PC-9 (cell line): ENCODE measurements at regions of chr15 and their contacts with region 1.

Region 1: DNA sequence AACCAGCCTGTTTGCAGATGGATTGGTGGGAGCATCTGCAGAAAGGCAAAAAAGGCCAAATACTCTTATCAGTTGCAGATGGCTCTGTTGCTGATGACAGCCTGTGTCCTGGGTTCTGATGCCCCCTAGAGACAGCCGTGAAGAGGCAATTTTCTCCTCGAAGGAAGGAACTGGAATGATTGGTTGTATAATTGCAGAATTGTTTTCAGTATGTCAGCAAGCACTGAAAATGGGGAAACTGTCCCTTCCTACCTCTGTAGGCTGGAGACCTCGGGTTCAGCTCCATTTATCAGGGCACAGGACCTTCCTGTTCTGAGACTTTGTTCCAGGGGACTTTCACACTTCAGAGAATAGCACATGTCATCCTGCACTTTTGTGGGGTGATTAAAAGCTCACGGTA is 103.0 kb downstream of the PGPEP1L start:
- DNase-seq: peak in 1 of 2 experiments; percentile 43
- H3K4me3 ChIP-seq: no peak overlapping the region
- H3K27ac ChIP-seq: no peak overlapping the region
- H3K4me1 ChIP-seq: no peaks in the 10 kb centered on the region
- H3K27me3 ChIP-seq: no peaks in the 10 kb centered on the region
- CTCF ChIP-seq: peak; percentile 72

Region 2: GRCh38 chr15:98442379-98442833 is 462.1 kb before region 1 on chr15:
- CTCF ChIA-PET with region 1: no interaction called
- POLR2A ChIA-PET with region 1: no interaction called
- intact Hi-C with region 1: loop called (anchors 5 kb)
- DNase-seq: peak; percentile 74 to 79
- H3K4me3 ChIP-seq: no peak overlapping the region
- H3K27ac ChIP-seq: no peak overlapping the region
- H3K4me1 ChIP-seq: peaks cover 15% of the 10 kb centered on the region
- H3K27me3 ChIP-seq: peaks cover 24% of the 10 kb centered on the region; the same call in 1 of the 2 replicates
- CTCF ChIP-seq: peak; percentile 88

Region 3: DNA sequence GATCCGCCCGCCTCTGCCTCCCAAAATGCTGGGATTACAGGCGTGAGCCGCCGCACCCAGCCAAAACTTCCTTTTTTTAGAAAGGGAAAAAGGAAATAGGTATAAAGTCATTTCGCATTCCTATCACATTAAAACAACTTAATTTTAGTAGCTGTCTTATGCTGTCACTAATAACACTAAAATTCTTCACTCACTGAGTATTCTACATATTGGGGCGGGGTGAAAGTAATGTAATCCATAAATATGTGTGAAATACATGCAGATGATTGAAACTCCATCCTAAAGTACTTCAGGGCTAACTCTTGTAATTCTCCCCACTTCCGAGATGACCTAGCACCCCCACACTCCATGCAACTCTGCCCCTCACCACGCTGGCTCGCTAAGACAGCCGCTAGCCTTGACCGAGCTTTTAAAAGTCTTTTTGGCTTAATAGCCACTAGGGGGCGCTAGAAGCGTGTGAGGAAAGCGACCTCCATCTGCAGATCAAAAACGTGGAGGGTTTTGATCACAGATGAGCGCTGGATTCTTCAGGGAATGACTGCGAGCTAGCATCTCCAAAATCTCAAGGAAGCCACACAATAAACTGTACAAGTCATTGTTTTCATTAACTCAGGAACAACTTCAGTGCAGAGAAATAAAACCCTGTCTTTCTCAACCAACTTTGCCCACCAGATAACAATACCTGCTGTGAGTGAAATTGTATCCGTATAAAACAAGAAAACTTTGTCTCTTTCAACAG is 385.6 kb before region 1 on chr15:
- CTCF ChIA-PET with region 1: no interaction called
- POLR2A ChIA-PET with region 1: no interaction called
- intact Hi-C with region 1: loop called (anchors 1 kb)
- DNase-seq: peak; percentile 47 to 62
- H3K4me3 ChIP-seq: no peak overlapping the region
- H3K27ac ChIP-seq: no peak overlapping the region
- H3K4me1 ChIP-seq: no peaks in the 10 kb centered on the region
- H3K27me3 ChIP-seq: 0 out of 2 replicates have a peak, but pooled peaks cover 5% of the 10 kb centered on the region
- CTCF ChIP-seq: peak; percentile 88

Region 4: DNA sequence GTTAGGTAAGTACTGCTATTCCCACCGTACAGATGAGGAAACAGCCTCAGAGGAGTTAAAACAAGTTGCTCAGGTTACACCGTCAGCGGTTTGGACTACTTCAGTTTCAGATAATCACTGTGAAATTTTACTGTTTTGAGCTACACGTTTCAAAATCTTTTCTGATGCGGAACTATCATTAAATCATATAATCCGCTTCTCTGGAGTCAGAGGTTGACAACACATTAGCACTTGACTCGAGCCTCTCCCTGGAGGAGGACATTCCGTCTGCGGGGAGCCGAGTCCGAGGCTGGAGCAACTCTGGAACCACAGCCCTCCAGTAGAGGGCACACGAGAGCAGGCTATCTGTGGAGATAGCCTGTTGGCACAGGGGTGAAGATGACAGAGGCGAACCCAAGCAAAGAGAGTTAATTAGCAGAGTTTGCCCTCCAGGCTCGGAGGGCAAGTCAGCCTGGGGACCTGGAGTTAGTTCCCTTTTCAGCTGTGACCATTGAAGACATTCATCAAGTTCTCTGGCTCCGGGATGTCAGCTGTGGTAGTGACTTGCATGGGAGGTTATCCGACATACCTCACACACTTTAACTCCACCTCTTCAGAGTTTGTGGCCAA is 125.0 kb before region 1 on chr15:
- CTCF ChIA-PET with region 1: no interaction called
- POLR2A ChIA-PET with region 1: no interaction called
- intact Hi-C with region 1: loop called (anchors 5 kb)
- DNase-seq: peak; percentile 62 to 77
- H3K4me3 ChIP-seq: no peak overlapping the region
- H3K27ac ChIP-seq: no peak overlapping the region
- H3K4me1 ChIP-seq: peaks cover 7% of the 10 kb centered on the region; the same call in 1 of the 2 replicates
- H3K27me3 ChIP-seq: no peaks in the 10 kb centered on the region
- CTCF ChIP-seq: peak; percentile 91

Region 5: GRCh38 chr15:98850961-98851573 is 53.5 kb before region 1 on chr15:
- CTCF ChIA-PET with region 1: interaction called, 3 read pairs
- POLR2A ChIA-PET with region 1: interaction called, 12 read pairs
- intact Hi-C with region 1: loop called (anchors 1 kb)
- DNase-seq: peak; percentile 35 to 72
- H3K4me3 ChIP-seq: peak overlapping the region; percentile 59; the same call in 1 of the 2 replicates
- H3K27ac ChIP-seq: peak overlapping the region; percentile 31; the same call in 1 of the 2 replicates
- H3K4me1 ChIP-seq: peaks cover 50% of the 10 kb centered on the region
- H3K27me3 ChIP-seq: no peaks in the 10 kb centered on the region
- CTCF ChIP-seq: peak; percentile 79

Region 6: GRCh38 chr15:99059010-99059981 is 154.8 kb after region 1 on chr15:
- CTCF ChIA-PET with region 1: no interaction called
- POLR2A ChIA-PET with region 1: no interaction called
- intact Hi-C with region 1: loop called (anchors 5 kb)
- DNase-seq: peak; percentile 49 to 81
- H3K4me3 ChIP-seq: peak overlapping the region; percentile 56; the same call in 1 of the 2 replicates
- H3K27ac ChIP-seq: no peak overlapping the region
- H3K4me1 ChIP-seq: no peaks in the 10 kb centered on the region; the same call in 1 of the 2 replicates
- H3K27me3 ChIP-seq: peaks cover 25% of the 10 kb centered on the region
- CTCF ChIP-seq: peak; percentile 43

Region 7: GRCh38 chr15:99076552-99077308 is 172.2 kb after region 1 on chr15:
- CTCF ChIA-PET with region 1: no interaction called
- POLR2A ChIA-PET with region 1: no interaction called
- intact Hi-C with region 1: loop called (anchors 5 kb)
- DNase-seq: peak; percentile 51 to 58
- H3K4me3 ChIP-seq: peak overlapping the region; percentile 51; the same call in 1 of the 2 replicates
- H3K27ac ChIP-seq: no peak overlapping the region
- H3K4me1 ChIP-seq: no peaks in the 10 kb centered on the region
- H3K27me3 ChIP-seq: no peaks in the 10 kb centered on the region
- CTCF ChIP-seq: peak; percentile 92